Left cardiac atrium (tissue), 4 donors: ENCODE measurements at regions of chr5 and their contacts with region 1.

Region 1: GRCh38 chr5:923281-923873 is 30.7 kb downstream of the TRIP13 start:
- DNase-seq: peak; percentile 89
- ATAC-seq: peak; percentile 88 to 91

Region 2: DNA sequence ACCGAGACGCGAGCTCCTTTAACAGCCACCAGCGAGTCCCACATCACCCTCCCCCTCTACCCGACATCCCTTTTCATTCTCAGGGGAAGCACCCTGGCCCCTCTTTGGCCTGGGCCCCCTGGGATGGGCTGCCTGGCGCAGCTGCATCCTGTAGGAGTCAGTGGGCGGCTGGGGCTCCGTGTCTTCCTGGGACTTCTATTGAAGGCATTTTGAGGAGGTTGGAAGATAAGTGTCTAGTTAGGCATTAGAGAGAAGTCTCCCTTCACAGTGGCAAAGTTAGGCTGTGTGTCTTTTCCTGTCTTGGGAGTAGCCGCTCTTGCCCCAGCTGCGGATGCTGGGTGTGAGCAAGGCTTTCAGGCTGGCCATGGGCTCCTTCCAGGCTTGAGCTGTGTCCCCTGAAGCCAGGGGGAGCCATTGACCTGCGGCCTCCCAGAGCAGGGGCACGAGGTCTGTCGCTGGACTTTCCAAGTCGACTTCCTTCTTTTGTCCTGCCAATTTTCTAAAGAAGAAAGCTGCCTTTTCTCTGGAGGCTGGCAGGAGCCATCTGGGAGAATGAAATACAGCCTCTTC is 66.7 kb after region 1 on chr5:
- intact Hi-C with region 1: loop called in 1 of 2 experiments (anchors 10 kb)
- DNase-seq: peak; percentile 83
- ATAC-seq: peak; percentile 67 to 68

Region 3: GRCh38 chr5:1167728-1168709 is 244.6 kb after region 1 on chr5:
- intact Hi-C with region 1: loop called (anchors 5 to 10 kb)
- DNase-seq: peak; percentile 78
- ATAC-seq: peak; percentile 76 to 87

Region 4: GRCh38 chr5:1174122-1174936 is 251.0 kb after region 1 on chr5:
- intact Hi-C with region 1: loop called (anchors 5 to 10 kb)
- DNase-seq: peak; percentile 73
- ATAC-seq: peak; percentile 57 to 79